Caco-2 (cell line): ENCODE measurements at regions of chr1 and their contacts with region 1.

Region 1: DNA sequence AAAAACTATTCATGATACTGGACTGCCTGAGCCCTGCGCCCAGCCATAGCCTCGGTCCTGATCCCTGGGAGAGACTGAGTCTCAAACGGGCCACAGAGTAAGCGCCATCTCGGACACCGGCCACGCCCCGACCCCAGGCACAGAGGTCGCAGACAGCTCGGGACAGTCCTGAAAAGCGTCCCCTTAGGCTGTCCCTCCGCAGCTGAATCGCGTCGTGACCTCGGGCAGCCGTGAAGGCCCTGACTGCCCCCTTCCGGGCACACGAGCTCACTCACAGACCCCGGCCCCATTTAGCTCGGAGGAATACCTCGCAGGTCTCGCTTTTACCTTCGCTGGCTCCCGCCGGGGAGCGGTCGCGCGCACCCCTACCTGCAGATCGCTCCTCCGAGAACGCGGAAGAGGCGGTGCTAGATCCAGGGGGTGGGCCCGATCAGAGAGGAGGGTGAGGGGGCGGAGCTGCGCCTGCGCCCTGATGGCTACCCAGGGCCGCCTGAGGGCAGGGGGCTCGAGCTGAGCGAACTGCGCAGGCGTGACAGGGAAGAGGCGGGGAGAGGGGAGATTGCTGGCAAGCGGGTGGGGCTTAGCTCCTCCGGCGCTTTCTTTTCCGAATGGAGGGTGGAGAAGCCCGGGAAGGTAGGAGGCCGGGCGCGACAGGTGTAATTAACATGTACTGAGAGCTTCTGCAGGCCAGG is at the start of gene MKNK1:
- DNase-seq: peak; percentile 95 to 97
- H3K4me3 ChIP-seq: peak within 1 kb of the TSS; percentile 48
- H3K4me3 Mint-ChIP-seq: peak within 1 kb of the TSS; percentile 84
- H3K27ac Mint-ChIP-seq: peak within 1 kb of the TSS; percentile 86
- H3K4me1 ChIP-seq: no peaks in the 10 kb centered on the region
- H3K4me1 Mint-ChIP-seq: peaks cover 5% of the 10 kb centered on the region
- H3K27me3 ChIP-seq: no peaks in the 10 kb centered on the region
- H3K27me3 Mint-ChIP-seq: no peaks in the 10 kb centered on the region
- CTCF ChIP-seq: peak in 1 of 2 experiments; percentile 38
- total RNA-seq, gene MKNK1: 22.7 and 30.5 TPM in 2 replicates

Region 2: DNA sequence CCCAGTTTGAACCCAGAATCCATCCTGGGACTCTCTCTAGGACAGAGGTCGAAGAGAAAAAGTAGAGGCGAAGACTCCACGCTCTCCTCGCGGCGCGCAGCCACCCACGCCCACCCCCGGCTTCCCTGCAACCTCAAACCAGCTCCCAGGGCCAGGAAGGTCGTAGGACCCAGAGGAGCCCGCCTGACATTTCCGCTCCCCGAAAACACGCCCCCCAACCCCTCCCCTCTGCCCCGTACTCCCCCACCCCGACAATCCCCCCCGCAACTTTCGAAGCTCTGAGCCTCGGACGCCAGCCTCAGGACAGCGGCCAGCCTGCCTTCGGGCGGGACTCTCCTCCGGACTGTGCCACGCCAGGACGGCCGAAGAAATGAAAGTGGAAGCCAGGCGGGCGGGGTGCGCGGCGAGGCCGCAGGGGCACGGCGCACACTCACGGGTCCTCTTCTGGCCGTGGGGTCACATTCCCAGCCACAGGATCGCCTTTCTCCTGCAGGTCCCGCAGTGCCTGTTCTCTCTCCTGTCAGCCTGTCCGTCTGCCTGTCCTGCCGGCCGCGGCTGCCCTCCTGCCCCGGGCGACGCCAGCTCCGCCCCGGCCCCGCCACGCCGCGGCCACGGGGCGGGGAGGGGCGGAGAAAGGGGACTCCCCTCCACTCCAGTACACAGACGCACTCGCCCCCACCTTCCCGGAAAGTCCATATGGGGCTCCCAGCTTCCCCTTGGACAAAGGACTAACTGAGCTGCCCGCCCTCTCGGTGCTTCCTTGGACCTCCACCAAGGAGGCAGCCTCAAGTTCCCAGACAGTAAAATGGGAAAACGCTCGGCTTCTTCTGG is 12.5 kb after region 1 on chr1 and contains the start of gene MOB3C:
- CTCF ChIA-PET with region 1: interaction called, 8 read pairs
- POLR2A ChIA-PET with region 1: interaction called, 18 read pairs
- intact Hi-C with region 1: no loop called
- DNase-seq: peak; percentile 50 to 60
- H3K4me3 ChIP-seq: peak within 1 kb of the TSS; percentile 84
- H3K4me3 Mint-ChIP-seq: peak within 1 kb of the TSS; percentile 87
- H3K27ac Mint-ChIP-seq: peak within 1 kb of the TSS; percentile 81
- H3K4me1 ChIP-seq: no peaks in the 10 kb centered on the region; the same call in 1 of the 2 replicates
- H3K4me1 Mint-ChIP-seq: peaks cover 13% of the 10 kb centered on the region
- H3K27me3 ChIP-seq: no peaks in the 10 kb centered on the region
- H3K27me3 Mint-ChIP-seq: no peaks in the 10 kb centered on the region
- CTCF ChIP-seq: no peak
- total RNA-seq, gene MOB3C: 1.6 and 2.1 TPM in 2 replicates

Region 3: GRCh38 chr1:46667782-46668760 is 64.1 kb after region 1 on chr1 and contains the start of gene ATPAF1:
- CTCF ChIA-PET with region 1: no interaction called
- POLR2A ChIA-PET with region 1: no interaction called
- intact Hi-C with region 1: loop called (anchors 5 kb)
- DNase-seq: peak; percentile 58 to 65
- H3K4me3 ChIP-seq: peak within 1 kb of the TSS; percentile 67
- H3K4me3 Mint-ChIP-seq: no peak within 1 kb of the TSS
- H3K27ac Mint-ChIP-seq: no peak within 1 kb of the TSS
- H3K4me1 ChIP-seq: no peaks in the 10 kb centered on the region
- H3K4me1 Mint-ChIP-seq: peaks cover 13% of the 10 kb centered on the region
- H3K27me3 ChIP-seq: no peaks in the 10 kb centered on the region
- H3K27me3 Mint-ChIP-seq: no peaks in the 10 kb centered on the region
- CTCF ChIP-seq: no peak
- total RNA-seq, gene ATPAF1: 26.9 and 31.7 TPM in 2 replicates